ENCODE measurements at regions of chr6 and their contacts with region 1.

Region 1: DNA sequence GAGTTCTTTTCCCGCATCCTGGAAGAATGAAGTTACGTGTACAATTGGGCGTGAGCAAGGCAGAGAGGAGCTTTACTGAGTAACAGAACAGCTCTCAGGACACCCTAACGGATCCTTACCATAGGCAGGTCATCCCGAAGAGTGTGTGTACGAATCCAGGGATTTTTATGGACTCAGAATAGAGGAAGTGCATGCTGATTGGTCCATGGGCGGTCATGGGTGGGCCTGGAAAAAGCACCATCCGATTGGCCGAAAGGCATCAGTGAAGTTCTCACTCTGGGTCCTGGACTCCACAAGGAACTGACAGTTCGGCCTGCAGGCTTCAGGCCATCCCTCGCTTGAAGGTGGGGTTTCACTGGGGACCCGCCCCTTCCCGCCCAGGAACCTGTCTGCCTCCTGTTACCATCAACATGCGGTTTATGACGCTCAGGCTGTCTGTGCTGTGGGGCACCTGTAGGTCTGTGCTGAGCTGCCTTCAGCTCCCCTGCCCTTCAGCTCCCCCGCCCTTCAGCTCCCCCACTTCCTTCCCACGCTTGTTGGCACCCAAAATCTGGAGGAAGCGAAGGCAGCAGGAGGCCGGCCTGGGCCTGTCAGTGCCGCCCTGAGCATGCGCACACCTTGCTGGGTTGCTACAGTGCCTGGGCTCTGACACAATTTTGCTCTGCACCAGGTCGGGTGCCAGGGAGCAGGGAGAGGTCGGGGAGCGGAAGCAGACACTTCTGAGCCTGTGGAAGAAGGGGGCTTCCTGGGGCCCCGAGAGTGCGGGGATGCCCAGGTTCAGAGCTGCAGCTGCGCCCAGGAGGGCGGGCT is 57.9 kb upstream of the MANEA start:
- DNase-seq: no peak
- ATAC-seq: no peak
- H3K4me3 ChIP-seq: no peak overlapping the region
- H3K27ac ChIP-seq: no peak overlapping the region
- H3K4me1 ChIP-seq: peaks cover 3% of the 10 kb centered on the region; the same call in 1 of the 2 replicates
- H3K27me3 ChIP-seq: no peaks in the 10 kb centered on the region
- CTCF ChIP-seq: no peak

Region 2: GRCh38 chr6:95175927-95176675 is 343.3 kb before region 1 on chr6:
- CTCF ChIA-PET with region 1: no interaction called
- POLR2A ChIA-PET with region 1: no interaction called
- intact Hi-C with region 1: no loop called
- DNase-seq: no peak
- ATAC-seq: no peak
- H3K4me3 ChIP-seq: no peak overlapping the region
- H3K27ac ChIP-seq: no peak overlapping the region
- H3K4me1 ChIP-seq: no peaks in the 10 kb centered on the region
- H3K27me3 ChIP-seq: no peaks in the 10 kb centered on the region
- CTCF ChIP-seq: no peak

Region 3: DNA sequence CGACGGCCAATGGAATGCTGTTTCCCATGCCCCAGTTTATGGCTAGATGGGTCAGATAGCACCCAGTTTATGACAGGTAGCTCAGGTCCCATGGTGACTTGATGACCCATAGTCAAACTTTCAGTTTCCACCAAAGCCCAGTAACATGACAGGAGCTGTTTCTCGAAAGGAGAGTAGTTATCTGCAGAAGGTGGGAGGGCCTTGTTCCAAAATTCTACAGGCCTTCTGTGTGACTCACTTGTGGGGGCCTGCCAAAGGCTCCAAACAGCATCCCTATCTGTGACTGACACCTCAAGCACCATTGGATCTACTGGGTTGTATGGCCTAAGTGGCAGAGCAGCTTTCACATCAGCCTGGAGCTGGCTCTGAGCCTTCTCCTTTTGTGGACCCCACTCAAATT is 321.8 kb before region 1 on chr6:
- CTCF ChIA-PET with region 1: no interaction called
- POLR2A ChIA-PET with region 1: no interaction called
- intact Hi-C with region 1: no loop called
- DNase-seq: no peak
- ATAC-seq: no peak
- H3K4me3 ChIP-seq: no peak overlapping the region
- H3K27ac ChIP-seq: no peak overlapping the region
- H3K4me1 ChIP-seq: no peaks in the 10 kb centered on the region
- H3K27me3 ChIP-seq: no peaks in the 10 kb centered on the region
- CTCF ChIP-seq: no peak

Region 4: DNA sequence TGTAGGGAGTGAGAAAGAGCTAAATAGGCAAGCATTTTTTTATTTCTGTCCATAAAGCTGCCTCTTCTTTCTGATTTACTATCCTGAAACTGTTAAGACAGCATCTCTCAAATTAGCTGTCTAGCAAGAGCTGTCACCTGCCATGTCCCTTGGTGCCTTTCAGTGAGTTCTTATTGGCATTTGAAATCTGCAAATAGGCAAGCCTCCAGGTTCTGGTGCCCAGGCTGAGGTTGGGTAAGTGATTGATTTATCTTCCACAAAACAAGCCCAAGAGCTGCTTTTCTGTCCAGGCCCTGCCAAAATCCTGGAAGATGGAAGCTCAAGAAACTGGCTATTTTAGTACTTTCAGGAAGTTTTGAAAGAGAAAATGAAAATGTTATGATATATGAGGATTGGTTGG is 80.3 kb after region 1 on chr6:
- CTCF ChIA-PET with region 1: no interaction called
- POLR2A ChIA-PET with region 1: interaction called, 14 read pairs
- intact Hi-C with region 1: no loop called
- DNase-seq: no peak
- ATAC-seq: no peak
- H3K4me3 ChIP-seq: no peak overlapping the region
- H3K27ac ChIP-seq: no peak overlapping the region
- H3K4me1 ChIP-seq: peaks cover 31% of the 10 kb centered on the region
- H3K27me3 ChIP-seq: no peaks in the 10 kb centered on the region
- CTCF ChIP-seq: no peak

Region 5: GRCh38 chr6:95795927-95796326 is 276.5 kb after region 1 on chr6:
- CTCF ChIA-PET with region 1: no interaction called
- POLR2A ChIA-PET with region 1: no interaction called
- intact Hi-C with region 1: no loop called
- DNase-seq: peak; percentile 18
- ATAC-seq: no peak
- H3K4me3 ChIP-seq: no peak overlapping the region
- H3K27ac ChIP-seq: no peak overlapping the region
- H3K4me1 ChIP-seq: no peaks in the 10 kb centered on the region
- H3K27me3 ChIP-seq: no peaks in the 10 kb centered on the region
- CTCF ChIP-seq: no peak

Measured in PC-3 (cell line).